HCT116 (cell line): ENCODE measurements at regions of chr5 and their contacts with region 1.

Region 1: GRCh38 chr5:65481635-65482295 is at the start of gene ADAMTS6:
- DNase-seq: peak; percentile 43
- ATAC-seq: peak; percentile 92
- H3K4me3 ChIP-seq: peak within 1 kb of the TSS; percentile 46 to 60
- H3K27ac ChIP-seq: peak within 1 kb of the TSS; percentile 4; the same call in 1 of the 2 replicates
- H3K4me1 ChIP-seq: peaks cover 11 to 21% of the 10 kb centered on the region in 2 experiments; a peak in 3 of 4 replicates
- H3K27me3 ChIP-seq: no peaks in the 10 kb centered on the region
- CTCF ChIP-seq: no peak
- POLR2A ChIP-seq: no peak
- RAD21 ChIP-seq: no peak
- total RNA-seq, gene ADAMTS6: 0.93 TPM

Region 2: GRCh38 chr5:64634997-64635686 is 846.6 kb before region 1 on chr5:
- CTCF ChIA-PET with region 1: interaction called, 5 read pairs
- POLR2A ChIA-PET with region 1: no interaction called
- RAD21 ChIA-PET with region 1: no interaction called
- intact Hi-C with region 1: loop called (anchors 2 kb)
- DNase-seq: peak; percentile 16
- ATAC-seq: no peak; the same call in 1 of the 2 replicates
- H3K4me3 ChIP-seq: no peak overlapping the region
- H3K27ac ChIP-seq: no peak overlapping the region
- H3K4me1 ChIP-seq: no peaks in the 10 kb centered on the region
- H3K27me3 ChIP-seq: peaks cover 15% of the 10 kb centered on the region; the same call in 1 of the 2 replicates
- CTCF ChIP-seq: peak; percentile 45 to 85 (median 62)
- POLR2A ChIP-seq: no peak
- RAD21 ChIP-seq: peak; percentile 82

Region 3: GRCh38 chr5:64811050-64811640 is 670.6 kb before region 1 on chr5:
- CTCF ChIA-PET with region 1: interaction called, 69 read pairs
- POLR2A ChIA-PET with region 1: no interaction called
- RAD21 ChIA-PET with region 1: interaction called, 6 to 7 read pairs
- intact Hi-C with region 1: loop called (anchors 1 kb)
- DNase-seq: peak; percentile 37
- ATAC-seq: 0 out of 2 replicates have a peak, but pooled peaks have one; percentile 47
- H3K4me3 ChIP-seq: no peak overlapping the region
- H3K27ac ChIP-seq: no peak overlapping the region
- H3K4me1 ChIP-seq: no peaks in the 10 kb centered on the region
- H3K27me3 ChIP-seq: no peaks in the 10 kb centered on the region
- CTCF ChIP-seq: peak; percentile 46 to 77 (median 49); a peak in 5 of 6 replicates
- POLR2A ChIP-seq: no peak
- RAD21 ChIP-seq: peak; percentile 70

Region 4: DNA sequence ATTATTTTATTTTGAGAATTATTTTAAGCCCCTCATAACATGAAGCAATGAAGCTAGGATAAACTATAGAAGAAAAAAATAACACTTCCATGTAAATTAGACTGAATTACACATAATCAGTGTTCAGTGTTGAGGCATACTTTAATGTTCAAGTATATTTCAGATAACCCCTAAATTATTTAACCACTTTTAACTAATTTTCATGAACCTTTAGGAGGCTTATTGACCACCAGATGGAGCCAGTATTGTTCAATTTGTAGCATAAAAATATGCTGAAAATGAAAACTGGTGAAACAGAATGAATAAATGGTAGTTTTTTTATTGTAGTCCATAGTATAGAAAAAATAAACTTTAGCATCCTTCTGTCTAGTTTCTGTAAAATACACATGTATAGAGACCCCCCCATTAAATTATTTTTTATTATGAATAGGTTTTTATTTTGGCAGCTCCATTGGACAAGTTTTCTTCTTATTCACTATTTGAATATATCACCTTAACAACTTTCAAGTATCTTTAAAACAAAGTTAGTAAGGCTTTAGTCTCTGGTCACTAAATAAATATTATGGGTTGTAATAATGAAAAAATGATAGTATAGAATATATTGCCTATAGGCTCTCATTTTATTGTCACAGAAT is 522.9 kb before region 1 on chr5:
- CTCF ChIA-PET with region 1: interaction called, 27 read pairs
- POLR2A ChIA-PET with region 1: no interaction called
- RAD21 ChIA-PET with region 1: interaction called, 3 read pairs
- intact Hi-C with region 1: loop called (anchors 1 kb)
- DNase-seq: peak; percentile 7
- ATAC-seq: no peak
- H3K4me3 ChIP-seq: no peak overlapping the region
- H3K27ac ChIP-seq: no peak overlapping the region
- H3K4me1 ChIP-seq: no peaks in the 10 kb centered on the region
- H3K27me3 ChIP-seq: no peaks in the 10 kb centered on the region
- CTCF ChIP-seq: peak; percentile 38 to 57 (median 50); a peak in 5 of 6 replicates
- POLR2A ChIP-seq: no peak
- RAD21 ChIP-seq: peak; percentile 57

Region 5: DNA sequence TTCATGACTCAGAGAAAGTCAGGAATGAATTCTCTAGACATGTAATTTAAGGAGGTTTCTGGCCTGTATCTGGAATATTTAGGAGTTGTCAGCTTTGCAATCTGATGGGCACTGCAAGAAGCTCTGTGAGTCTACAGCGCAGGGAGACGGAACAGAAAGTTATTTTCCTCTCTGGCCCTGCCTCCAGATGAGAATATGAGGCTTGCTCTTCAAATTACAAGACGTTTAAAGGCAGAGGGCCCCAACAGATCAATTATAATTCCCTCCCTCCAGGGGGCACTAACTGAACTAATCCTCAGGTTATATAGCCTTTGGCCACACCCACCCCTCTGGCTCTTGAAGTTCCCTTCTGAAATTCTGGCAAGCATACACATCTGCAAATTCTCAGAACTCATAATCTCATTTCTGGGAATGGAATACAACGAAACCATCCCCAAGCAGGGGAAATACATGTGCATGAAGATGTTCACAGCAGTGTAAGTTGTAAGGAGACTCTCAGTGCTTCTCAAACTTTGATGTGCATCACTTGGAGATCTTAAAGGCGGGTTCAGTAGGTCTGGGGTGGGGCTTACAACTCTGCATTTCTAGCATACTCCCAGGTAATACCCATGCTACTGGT is 405.4 kb before region 1 on chr5:
- CTCF ChIA-PET with region 1: no interaction called
- POLR2A ChIA-PET with region 1: no interaction called
- RAD21 ChIA-PET with region 1: no interaction called
- intact Hi-C with region 1: loop called (anchors 10 kb)
- DNase-seq: peak; percentile 57
- ATAC-seq: peak; percentile 97
- H3K4me3 ChIP-seq: no peak overlapping the region
- H3K27ac ChIP-seq: no peak overlapping the region
- H3K4me1 ChIP-seq: peaks cover 3 to 4% of the 10 kb centered on the region in 2 experiments; a peak in 2 of 4 replicates
- H3K27me3 ChIP-seq: 0 out of 2 replicates have a peak, but pooled peaks cover 3% of the 10 kb centered on the region
- CTCF ChIP-seq: peak in 2 of 3 experiments; percentile 49 to 54; a peak in 4 of 6 replicates
- POLR2A ChIP-seq: no peak
- RAD21 ChIP-seq: peak; percentile 50

Region 6: GRCh38 chr5:65100911-65101631 is 380.7 kb before region 1 on chr5:
- CTCF ChIA-PET with region 1: interaction called, 20 read pairs
- POLR2A ChIA-PET with region 1: no interaction called
- RAD21 ChIA-PET with region 1: interaction called in 1 of 2 experiments, 4 read pairs
- intact Hi-C with region 1: loop called (anchors 1 kb)
- DNase-seq: peak; percentile 22
- ATAC-seq: peak; percentile 96
- H3K4me3 ChIP-seq: no peak overlapping the region
- H3K27ac ChIP-seq: no peak overlapping the region
- H3K4me1 ChIP-seq: peaks cover 0 to 8% of the 10 kb centered on the region in 2 experiments; a peak in 1 of 4 replicates
- H3K27me3 ChIP-seq: no peaks in the 10 kb centered on the region
- CTCF ChIP-seq: peak; percentile 33 to 72 (median 72); a peak in 5 of 6 replicates
- POLR2A ChIP-seq: no peak
- RAD21 ChIP-seq: peak; percentile 61

Region 7: DNA sequence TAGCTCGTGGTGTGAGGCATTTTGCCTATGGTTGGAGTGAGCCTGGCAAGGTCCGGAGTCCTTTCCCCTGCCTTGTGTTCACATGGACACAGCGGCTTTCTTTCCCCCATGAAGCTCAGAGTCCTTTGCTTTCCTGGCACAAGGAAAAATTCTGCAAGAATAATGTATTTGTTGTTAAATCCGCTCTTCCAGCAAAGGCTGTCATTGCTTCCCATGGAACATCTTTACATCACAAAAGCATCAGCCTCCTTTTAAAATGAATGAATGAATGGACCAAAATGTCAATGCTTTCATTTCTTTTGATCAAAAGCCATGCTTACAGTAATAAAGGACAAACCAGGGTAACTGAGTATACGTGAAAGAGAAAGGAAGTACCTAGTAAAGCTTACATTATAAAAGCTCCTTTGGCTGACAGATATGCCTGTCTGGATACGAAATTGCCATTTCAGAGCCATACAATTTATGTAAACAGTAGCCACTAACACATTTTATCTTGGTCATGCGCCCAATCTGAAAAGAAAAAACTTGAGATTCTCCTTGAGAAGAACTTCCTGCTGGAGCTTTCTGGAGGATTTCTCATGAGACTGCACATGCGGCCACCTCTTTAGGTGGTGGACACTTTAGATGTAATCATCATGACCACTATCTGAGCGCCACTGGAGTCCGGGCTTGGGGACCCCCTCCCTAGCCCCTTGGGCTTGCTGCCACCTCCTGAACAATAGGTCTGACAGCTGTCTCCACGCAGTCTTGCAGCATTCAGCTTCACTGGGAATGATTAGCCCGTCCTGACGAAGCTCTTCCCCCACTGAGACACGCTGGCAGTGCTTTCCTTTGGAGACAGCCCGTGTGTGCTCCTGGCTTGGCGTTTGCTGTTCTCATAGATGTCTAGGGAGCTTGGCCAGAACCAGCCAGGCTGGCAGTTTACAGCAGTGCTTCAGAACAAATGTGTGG is 355.9 kb before region 1 on chr5:
- CTCF ChIA-PET with region 1: no interaction called
- POLR2A ChIA-PET with region 1: no interaction called
- RAD21 ChIA-PET with region 1: no interaction called
- intact Hi-C with region 1: no loop called
- DNase-seq: no peak
- ATAC-seq: no peak
- H3K4me3 ChIP-seq: no peak overlapping the region
- H3K27ac ChIP-seq: no peak overlapping the region
- H3K4me1 ChIP-seq: no peaks in the 10 kb centered on the region
- H3K27me3 ChIP-seq: no peaks in the 10 kb centered on the region
- CTCF ChIP-seq: no peak
- POLR2A ChIP-seq: no peak
- RAD21 ChIP-seq: no peak

Region 8: GRCh38 chr5:65213921-65214525 is 267.7 kb before region 1 on chr5:
- CTCF ChIA-PET with region 1: interaction called, 5 read pairs
- POLR2A ChIA-PET with region 1: no interaction called
- RAD21 ChIA-PET with region 1: no interaction called
- intact Hi-C with region 1: loop called (anchors 1 kb)
- DNase-seq: peak; percentile 26
- ATAC-seq: peak; percentile 93
- H3K4me3 ChIP-seq: no peak overlapping the region
- H3K27ac ChIP-seq: no peak overlapping the region
- H3K4me1 ChIP-seq: no peaks in the 10 kb centered on the region
- H3K27me3 ChIP-seq: no peaks in the 10 kb centered on the region
- CTCF ChIP-seq: peak; percentile 34 to 72 (median 68); a peak in 5 of 6 replicates
- POLR2A ChIP-seq: no peak
- RAD21 ChIP-seq: peak; percentile 35